Naive thymus-derived CD4-positive, alpha-beta T cell (primary cell): ENCODE measurements at regions of chr13 and their contacts with region 1.

Region 1: GRCh38 chr13:99087096-99087953 is 109.5 kb upstream of the DOCK9 start:
- DNase-seq: peak; percentile 83 to 95 (median 92)
- ATAC-seq: peak; percentile 85
- H3K4me3 ChIP-seq: peak overlapping the region; percentile 97
- H3K4me3 Mint-ChIP-seq: peak overlapping the region; percentile 92 to 100 (median 98)
- H3K27ac ChIP-seq: peak overlapping the region; percentile 95
- H3K27ac Mint-ChIP-seq: peak overlapping the region; percentile 96 to 99 (median 98)
- H3K4me1 ChIP-seq: peaks cover 29 to 31% of the 10 kb centered on the region in 2 donors
- H3K4me1 Mint-ChIP-seq: peaks cover 26 to 53% (median 42%) of the 10 kb centered on the region in 7 donors
- H3K27me3 ChIP-seq: no peaks in the 10 kb centered on the region
- H3K27me3 Mint-ChIP-seq: peaks cover 0 to 5% (median 3%) of the 10 kb centered on the region in 5 donors

Region 2: DNA sequence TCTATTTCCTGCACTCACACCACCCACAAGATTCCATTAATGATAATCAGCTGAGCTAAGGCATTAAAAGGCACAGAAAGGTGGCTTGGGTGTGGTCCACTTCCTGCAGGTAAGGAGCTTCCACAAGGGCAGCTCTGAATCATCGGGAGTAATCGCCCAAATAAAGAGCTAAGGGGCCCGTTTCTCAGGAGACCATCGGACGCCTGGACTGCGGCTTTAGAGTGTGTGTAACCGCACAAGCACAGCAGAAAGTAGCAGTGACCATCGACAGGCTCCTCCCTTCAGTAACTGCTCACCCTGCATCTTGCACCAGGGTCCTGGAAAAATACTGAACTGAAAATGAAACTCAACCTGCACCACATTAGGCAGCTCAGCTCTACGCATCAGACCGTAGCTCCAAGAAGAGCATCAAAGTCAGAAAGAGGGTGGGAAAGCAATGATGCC is 516.4 kb before region 1 on chr13:
- CTCF ChIA-PET with region 1: no interaction called
- POLR2A ChIA-PET with region 1: interaction called, 3 read pairs
- intact Hi-C with region 1: loop called (anchors 5 to 10 kb)
- DNase-seq: peak in 6 of 9 donors; percentile 51 to 72 (median 60)
- ATAC-seq: peak; percentile 70
- H3K4me3 ChIP-seq: peak overlapping the region; percentile 63
- H3K4me3 Mint-ChIP-seq: peak overlapping the region; percentile 84 to 99 (median 90)
- H3K27ac ChIP-seq: peak overlapping the region; percentile 85
- H3K27ac Mint-ChIP-seq: peak overlapping the region; percentile 84 to 98 (median 96)
- H3K4me1 ChIP-seq: peaks cover 76 to 83% of the 10 kb centered on the region in 2 donors
- H3K4me1 Mint-ChIP-seq: peaks cover 82 to 97% (median 96%) of the 10 kb centered on the region in 7 donors
- H3K27me3 ChIP-seq: no peaks in the 10 kb centered on the region
- H3K27me3 Mint-ChIP-seq: no peaks in the 10 kb centered on the region

Region 3: DNA sequence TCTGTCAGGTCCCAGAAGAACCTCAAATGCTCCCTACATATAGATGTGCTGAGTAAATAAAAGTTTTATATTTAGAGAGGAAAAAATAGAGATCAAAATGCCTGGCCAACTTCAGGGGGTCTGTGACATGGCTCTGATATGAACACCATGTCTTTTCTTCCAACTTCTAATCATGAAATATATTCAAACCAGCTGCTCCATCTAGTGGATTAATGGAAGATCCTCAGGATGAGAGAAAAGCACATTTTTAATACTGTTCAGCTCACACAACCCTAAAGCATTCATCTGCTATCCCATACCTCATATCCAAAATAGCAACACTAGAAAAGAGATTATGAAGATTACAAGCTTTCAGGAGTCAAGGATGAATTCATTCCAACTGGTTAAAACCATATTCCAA is 53.5 kb before region 1 on chr13:
- CTCF ChIA-PET with region 1: interaction called, 6 read pairs
- POLR2A ChIA-PET with region 1: interaction called, 5 read pairs
- intact Hi-C with region 1: loop called in 1 of 2 experiments (anchors 2 kb)
- DNase-seq: peak in 5 of 9 donors; percentile 33 to 53 (median 41)
- ATAC-seq: peak; percentile 69
- H3K4me3 ChIP-seq: no peak overlapping the region
- H3K4me3 Mint-ChIP-seq: peak overlapping the region in 2 of 10 donors; percentile 2
- H3K27ac ChIP-seq: no peak overlapping the region
- H3K27ac Mint-ChIP-seq: peak overlapping the region in 6 of 9 donors; percentile 0 to 81 (median 18)
- H3K4me1 ChIP-seq: peaks cover 0 to 15% of the 10 kb centered on the region in 2 donors
- H3K4me1 Mint-ChIP-seq: peaks cover 18 to 66% (median 59%) of the 10 kb centered on the region in 7 donors
- H3K27me3 ChIP-seq: no peaks in the 10 kb centered on the region
- H3K27me3 Mint-ChIP-seq: peaks cover 0 to 9% (median 0%) of the 10 kb centered on the region in 5 donors

Region 4: GRCh38 chr13:99075268-99076191 is 11.8 kb before region 1 on chr13:
- CTCF ChIA-PET with region 1: interaction called, 3 read pairs
- POLR2A ChIA-PET with region 1: interaction called, 19 read pairs
- intact Hi-C with region 1: loop called in 1 of 2 experiments (anchors 1 kb)
- DNase-seq: peak in 7 of 9 donors; percentile 29 to 64 (median 55)
- ATAC-seq: peak; percentile 84
- H3K4me3 ChIP-seq: peak overlapping the region; percentile 11
- H3K4me3 Mint-ChIP-seq: peak overlapping the region; percentile 44 to 82 (median 64)
- H3K27ac ChIP-seq: peak overlapping the region; percentile 54
- H3K27ac Mint-ChIP-seq: peak overlapping the region; percentile 75 to 95 (median 89)
- H3K4me1 ChIP-seq: peaks cover 27 to 39% of the 10 kb centered on the region in 2 donors
- H3K4me1 Mint-ChIP-seq: peaks cover 40 to 92% (median 88%) of the 10 kb centered on the region in 7 donors
- H3K27me3 ChIP-seq: no peaks in the 10 kb centered on the region
- H3K27me3 Mint-ChIP-seq: no peaks in the 10 kb centered on the region

Region 5: DNA sequence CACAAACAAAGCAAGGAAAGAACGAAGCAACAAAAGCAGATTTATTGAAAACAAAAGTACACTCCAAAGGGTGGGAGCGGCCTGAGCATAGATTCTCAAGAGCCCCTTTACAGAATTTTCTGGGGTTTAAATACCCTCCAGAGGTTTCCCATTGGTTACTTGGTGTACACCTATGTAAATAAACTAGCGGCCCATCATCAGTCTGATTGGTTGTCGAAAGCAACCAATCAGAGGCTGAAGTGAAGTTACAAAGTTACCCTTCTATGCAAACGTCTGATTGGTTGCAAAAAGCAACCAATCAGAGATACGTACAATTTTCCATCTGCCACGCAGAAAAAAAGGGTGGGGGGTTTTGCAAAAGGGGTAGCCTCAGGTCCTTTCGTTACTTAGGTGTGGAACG is 17.1 kb after region 1 on chr13:
- CTCF ChIA-PET with region 1: no interaction called
- POLR2A ChIA-PET with region 1: no interaction called
- intact Hi-C with region 1: no loop called
- DNase-seq: no peak
- ATAC-seq: no peak
- H3K4me3 ChIP-seq: no peak overlapping the region
- H3K4me3 Mint-ChIP-seq: no peak overlapping the region
- H3K27ac ChIP-seq: no peak overlapping the region
- H3K27ac Mint-ChIP-seq: no peak overlapping the region
- H3K4me1 ChIP-seq: no peaks in the 10 kb centered on the region
- H3K4me1 Mint-ChIP-seq: peaks cover 0 to 14% (median 4%) of the 10 kb centered on the region in 7 donors
- H3K27me3 ChIP-seq: no peaks in the 10 kb centered on the region
- H3K27me3 Mint-ChIP-seq: peaks cover 0 to 29% (median 7%) of the 10 kb centered on the region in 5 donors

Region 6: GRCh38 chr13:99307648-99308339 is 220.5 kb after region 1 on chr13:
- CTCF ChIA-PET with region 1: no interaction called
- POLR2A ChIA-PET with region 1: no interaction called
- intact Hi-C with region 1: loop called (anchors 2 to 5 kb)
- DNase-seq: peak in 2 of 9 donors; percentile 44 to 69
- ATAC-seq: peak; percentile 40
- H3K4me3 ChIP-seq: peak overlapping the region; percentile 89
- H3K4me3 Mint-ChIP-seq: peak overlapping the region; percentile 89 to 100 (median 94)
- H3K27ac ChIP-seq: peak overlapping the region; percentile 88
- H3K27ac Mint-ChIP-seq: peak overlapping the region; percentile 81 to 99 (median 95)
- H3K4me1 ChIP-seq: peaks cover 49 to 50% of the 10 kb centered on the region in 2 donors
- H3K4me1 Mint-ChIP-seq: peaks cover 56 to 84% (median 77%) of the 10 kb centered on the region in 7 donors
- H3K27me3 ChIP-seq: no peaks in the 10 kb centered on the region
- H3K27me3 Mint-ChIP-seq: no peaks in the 10 kb centered on the region

Region 7: DNA sequence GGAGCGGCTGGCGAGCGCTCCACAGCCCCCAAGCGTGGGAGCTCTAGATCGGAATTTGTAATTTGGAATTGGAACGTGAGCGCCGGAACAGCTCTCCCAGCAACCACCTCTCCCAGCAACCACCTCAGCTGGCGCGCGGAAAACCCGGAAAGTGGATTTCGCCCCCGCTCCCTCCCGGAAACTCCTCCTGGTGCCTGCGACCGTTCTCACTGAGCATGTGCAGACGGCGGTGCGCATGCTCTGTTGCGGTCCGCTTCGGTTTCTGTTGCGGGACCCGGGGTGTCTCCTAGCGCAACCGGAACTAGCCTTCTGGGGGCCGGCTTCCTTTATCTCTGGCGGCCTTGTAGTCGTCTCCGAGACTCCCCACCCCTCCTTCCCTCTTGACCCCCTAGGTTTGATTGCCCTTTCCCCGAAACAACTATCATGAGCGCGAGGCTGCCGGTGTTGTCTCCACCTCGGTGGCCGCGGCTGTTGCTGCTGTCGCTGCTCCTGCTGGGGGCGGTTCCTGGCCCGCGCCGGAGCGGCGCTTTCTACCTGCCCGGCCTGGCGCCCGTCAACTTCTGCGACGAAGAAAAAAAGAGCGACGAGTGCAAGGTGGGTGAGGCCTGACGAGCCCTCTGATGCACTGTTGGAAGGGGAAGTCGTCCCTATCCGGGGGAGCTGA is 414.0 kb after region 1 on chr13 and contains the start of gene TM9SF2:
- CTCF ChIA-PET with region 1: no interaction called
- POLR2A ChIA-PET with region 1: no interaction called
- intact Hi-C with region 1: loop called (anchors 1 to 2 kb)
- DNase-seq: peak; percentile 94 to 98 (median 96)
- ATAC-seq: peak; percentile 70
- H3K4me3 ChIP-seq: peak within 1 kb of the TSS; percentile 93
- H3K4me3 Mint-ChIP-seq: peak within 1 kb of the TSS; percentile 94 to 100 (median 97)
- H3K27ac ChIP-seq: peak within 1 kb of the TSS; percentile 94
- H3K27ac Mint-ChIP-seq: peak within 1 kb of the TSS; percentile 96 to 99 (median 98)
- H3K4me1 ChIP-seq: peaks cover 47 to 65% of the 10 kb centered on the region in 2 donors
- H3K4me1 Mint-ChIP-seq: peaks cover 57 to 93% (median 85%) of the 10 kb centered on the region in 7 donors
- H3K27me3 ChIP-seq: no peaks in the 10 kb centered on the region
- H3K27me3 Mint-ChIP-seq: peaks cover 0 to 4% (median 0%) of the 10 kb centered on the region in 5 donors
- total RNA-seq, gene TM9SF2: 38.0 to 76.3 (median 53.1) TPM

Region 8: DNA sequence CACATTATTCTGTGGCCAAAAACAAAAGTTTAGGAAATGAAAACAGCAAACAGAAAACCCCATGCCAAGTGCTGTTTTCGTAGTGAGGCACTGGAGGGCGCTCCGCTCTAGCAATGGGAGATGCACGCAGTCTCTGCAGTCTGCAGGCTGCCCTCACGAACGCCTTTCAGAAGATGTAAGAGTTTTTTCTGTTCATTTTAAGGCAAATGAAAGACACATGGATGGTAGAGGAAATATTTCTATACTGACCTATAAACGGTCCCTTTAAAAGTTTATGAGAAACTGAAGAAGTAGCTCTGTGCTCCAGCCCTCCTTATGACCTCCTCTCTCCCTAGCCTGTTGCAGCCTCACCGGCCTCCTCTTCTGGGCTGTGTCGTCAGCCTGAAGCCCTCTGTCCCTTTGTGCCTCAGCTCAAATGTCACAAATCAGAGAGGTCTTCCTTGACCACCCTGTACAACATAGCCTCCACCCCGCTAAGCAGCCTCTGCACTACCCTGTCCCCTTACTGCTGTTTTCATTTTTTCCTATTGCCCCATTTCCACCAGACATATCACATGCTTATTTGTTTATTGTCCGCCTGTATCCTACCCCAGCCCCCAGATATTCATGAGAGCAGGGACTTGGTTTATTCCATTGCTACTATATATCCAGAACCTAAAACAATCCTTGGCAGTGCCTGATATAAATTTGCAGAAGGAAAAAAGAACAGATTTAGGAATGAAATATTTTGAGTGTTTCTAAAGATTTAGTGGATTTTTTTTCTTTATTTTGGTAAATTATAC is 530.3 kb after region 1 on chr13:
- CTCF ChIA-PET with region 1: no interaction called
- POLR2A ChIA-PET with region 1: no interaction called
- intact Hi-C with region 1: no loop called
- DNase-seq: peak in 2 of 9 donors; percentile 19 to 20
- ATAC-seq: peak; percentile 56
- H3K4me3 ChIP-seq: no peak overlapping the region
- H3K4me3 Mint-ChIP-seq: no peak overlapping the region
- H3K27ac ChIP-seq: no peak overlapping the region
- H3K27ac Mint-ChIP-seq: peak overlapping the region in 1 of 9 donors; percentile 2
- H3K4me1 ChIP-seq: no peaks in the 10 kb centered on the region
- H3K4me1 Mint-ChIP-seq: peaks cover 6 to 40% (median 24%) of the 10 kb centered on the region in 7 donors
- H3K27me3 ChIP-seq: no peaks in the 10 kb centered on the region
- H3K27me3 Mint-ChIP-seq: peaks cover 0 to 6% (median 0%) of the 10 kb centered on the region in 5 donors